Psoas muscle (tissue), 8 donors: ENCODE measurements at regions of chr4 and their contacts with region 1.

Region 1: DNA sequence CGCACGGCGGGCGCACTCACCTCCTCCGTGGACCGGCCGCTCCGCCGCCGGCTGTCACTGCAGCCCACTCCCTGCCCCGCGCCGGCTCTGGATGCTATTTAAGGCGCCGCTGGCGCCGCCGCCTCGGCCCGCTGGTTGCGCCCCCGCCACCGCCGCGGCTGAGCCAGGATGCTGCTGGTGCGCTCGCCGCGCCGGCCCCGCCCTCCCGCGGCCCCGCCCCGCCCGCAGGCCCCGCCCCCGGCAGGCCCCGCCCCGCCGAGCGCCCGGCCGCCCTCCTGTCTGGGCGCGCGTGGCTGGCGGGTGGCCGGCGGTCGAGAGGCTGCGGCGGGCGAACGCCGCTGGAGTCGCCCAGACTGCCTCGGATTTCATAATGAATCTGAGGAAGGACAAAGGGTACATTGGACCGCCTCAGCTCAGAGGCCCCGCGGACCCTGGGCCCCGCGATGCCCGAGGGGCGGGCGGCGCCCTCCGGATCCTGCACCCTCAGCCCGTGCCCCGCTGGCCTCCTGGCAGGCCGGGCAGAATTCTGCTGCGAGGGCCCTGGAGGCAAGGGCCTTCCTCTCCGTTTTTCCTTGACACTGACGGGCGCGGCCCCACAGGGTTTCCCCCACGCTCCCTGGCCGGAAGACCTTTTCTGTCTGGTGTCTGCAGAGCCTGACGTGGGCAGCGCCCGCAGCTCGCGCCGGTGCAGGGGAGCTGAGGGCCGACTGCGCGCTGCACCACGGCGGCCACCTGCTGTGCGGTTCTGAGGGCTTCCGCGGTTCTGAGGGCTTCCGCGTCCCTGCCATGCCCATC is at the start of gene ACSL1:
- DNase-seq: peak; percentile 91 to 95
- ATAC-seq: peak; percentile 81 to 89 (median 87)
- H3K4me3 ChIP-seq: peak within 1 kb of the TSS; percentile 82
- H3K27ac ChIP-seq: peak within 1 kb of the TSS; percentile 92
- H3K4me1 ChIP-seq: peaks cover 32% of the 10 kb centered on the region
- H3K27me3 ChIP-seq: no peaks in the 10 kb centered on the region
- CTCF ChIP-seq: peak; percentile 7
- total RNA-seq, gene ACSL1: 257 to 1,392 (median 704) TPM

Region 2: DNA sequence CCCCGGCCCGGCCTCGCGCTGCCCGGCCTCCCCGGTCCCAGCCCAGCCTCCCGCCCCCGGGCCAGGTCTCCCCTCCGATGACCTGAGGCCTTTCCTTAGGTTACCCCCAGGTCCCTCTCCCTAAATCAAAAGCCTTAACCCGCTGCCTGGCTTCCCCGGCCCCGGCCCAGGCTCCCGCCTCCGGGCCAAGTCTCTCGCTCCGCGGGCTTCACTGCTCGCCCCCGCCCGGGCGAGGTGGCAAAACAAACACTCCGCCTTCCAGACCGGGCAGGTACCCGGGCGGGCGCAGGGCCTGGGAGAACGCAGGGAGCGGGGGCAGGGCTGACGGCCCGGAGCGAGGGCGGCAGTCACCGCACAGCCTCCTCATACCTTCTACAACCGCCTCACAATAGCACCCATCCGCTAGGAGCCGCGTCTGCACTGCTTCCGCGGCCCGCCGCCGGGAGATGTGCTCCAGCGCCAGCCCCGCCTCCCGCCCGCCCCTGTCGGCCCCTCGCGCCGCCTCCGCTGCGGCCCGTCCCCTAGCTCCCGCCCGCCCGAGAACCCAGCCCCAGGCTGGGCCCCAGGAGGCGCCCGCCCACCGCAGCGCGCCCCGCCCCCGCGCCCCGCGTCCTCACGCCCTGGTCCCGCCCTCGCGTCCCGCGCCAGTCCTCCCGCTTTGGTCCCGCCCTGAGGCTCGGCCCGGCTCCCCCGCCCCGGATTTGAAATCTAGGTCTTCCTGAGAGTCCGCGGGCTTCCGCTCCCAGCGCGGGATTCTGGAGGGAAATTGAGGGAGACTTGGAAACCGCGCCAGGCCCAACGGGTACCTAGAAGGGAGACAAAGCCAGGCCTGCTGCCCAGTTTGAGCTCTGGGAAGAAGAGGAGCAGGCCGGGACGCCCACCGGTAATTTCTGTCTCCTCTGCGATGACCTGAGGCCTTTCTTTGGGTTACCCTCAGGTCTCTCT is 176.8 kb before region 1 on chr4 and contains the starts of genes CASP3 and PRIMPOL:
- intact Hi-C with region 1: loop called (anchors 5 to 10 kb)
- DNase-seq: peak; percentile 98 to 99
- ATAC-seq: peak; percentile 92 to 95 (median 94)
- H3K4me3 ChIP-seq: peak within 1 kb of the TSS; percentile 91
- H3K27ac ChIP-seq: peak within 1 kb of the TSS; percentile 99
- H3K4me1 ChIP-seq: peaks cover 53% of the 10 kb centered on the region
- H3K27me3 ChIP-seq: no peaks in the 10 kb centered on the region
- CTCF ChIP-seq: peak; percentile 29
- total RNA-seq, gene CASP3: 13.8 to 49.7 (median 20.5) TPM
- total RNA-seq, gene PRIMPOL: 4.8 to 10.1 (median 7.5) TPM

Region 3: DNA sequence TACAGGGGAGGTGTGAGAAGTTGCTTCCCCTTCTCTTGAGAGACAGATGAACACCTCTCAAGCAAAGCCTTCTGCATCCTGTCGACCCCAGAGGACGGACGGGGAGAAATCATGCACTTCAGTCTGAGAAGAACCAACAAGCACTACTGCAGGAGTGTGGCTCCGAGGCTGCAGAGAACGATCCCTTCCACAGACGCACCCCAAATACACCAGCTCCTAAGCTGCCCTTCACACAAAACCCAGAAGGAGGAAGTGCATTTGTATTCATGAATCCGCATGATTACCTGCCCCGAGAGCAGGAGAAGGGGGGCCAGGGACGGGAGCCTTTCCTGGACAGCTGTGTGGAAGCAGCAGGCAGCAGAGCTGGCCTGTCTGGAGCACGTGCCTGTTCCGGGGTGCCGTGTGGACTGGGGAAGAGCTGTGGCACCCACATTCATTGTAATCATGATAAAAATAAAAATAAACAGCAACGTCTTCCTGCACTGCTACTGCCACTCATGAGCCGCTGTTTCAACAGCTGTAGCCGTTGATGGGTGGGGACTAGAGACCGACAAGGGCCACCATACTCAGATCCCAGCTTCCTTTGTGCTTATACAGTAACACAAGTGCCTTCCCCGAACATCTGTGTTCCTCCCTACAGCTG is 43.2 kb before region 1 on chr4:
- intact Hi-C with region 1: loop called in 1 of 2 experiments (anchors 5 kb)
- DNase-seq: no peak
- ATAC-seq: peak; percentile 19 to 29 (median 23)
- H3K4me3 ChIP-seq: no peak overlapping the region
- H3K27ac ChIP-seq: peak overlapping the region; percentile 46
- H3K4me1 ChIP-seq: peaks cover 6% of the 10 kb centered on the region
- H3K27me3 ChIP-seq: no peaks in the 10 kb centered on the region
- CTCF ChIP-seq: no peak

Region 4: DNA sequence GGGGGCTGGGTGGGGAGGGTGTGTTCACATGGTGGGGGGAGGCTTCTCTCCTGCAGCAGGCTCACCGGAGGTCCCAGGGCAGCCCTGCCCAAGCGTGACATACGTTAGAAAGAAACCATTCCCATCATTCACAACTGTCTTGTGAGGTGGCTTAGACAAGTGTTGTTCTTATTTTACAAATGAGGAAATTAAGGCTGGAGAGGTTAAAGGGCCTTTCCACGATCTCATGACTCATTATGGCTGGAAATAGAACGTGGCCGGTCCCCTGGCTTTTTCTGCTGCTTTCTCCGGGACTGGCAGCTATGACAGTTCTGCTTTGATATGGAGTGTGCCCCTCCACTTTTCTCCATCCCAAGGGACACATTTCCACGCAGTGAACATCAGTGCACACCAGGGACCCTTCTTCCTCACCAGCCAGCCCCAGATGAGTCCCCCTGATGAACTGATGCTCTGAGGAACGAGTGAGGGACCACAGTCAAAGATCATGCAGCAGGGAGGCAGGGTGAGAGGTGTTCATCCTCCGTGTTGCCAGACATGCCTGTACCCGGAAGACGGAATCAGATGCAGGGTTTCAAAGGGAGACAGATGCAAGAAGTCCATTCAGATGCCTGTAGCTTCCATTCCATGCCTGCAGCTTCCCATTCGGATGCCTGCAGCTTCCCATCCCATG is 63.7 kb after region 1 on chr4:
- intact Hi-C with region 1: loop called in 1 of 2 experiments (anchors 5 kb)
- DNase-seq: no peak
- ATAC-seq: peak in 2 of 4 donors; percentile 42 to 44
- H3K4me3 ChIP-seq: no peak overlapping the region
- H3K27ac ChIP-seq: no peak overlapping the region
- H3K4me1 ChIP-seq: peaks cover 4% of the 10 kb centered on the region
- H3K27me3 ChIP-seq: no peaks in the 10 kb centered on the region
- CTCF ChIP-seq: no peak